ENCODE measurements at regions of chr6 and their contacts with region 1.

Region 1: DNA sequence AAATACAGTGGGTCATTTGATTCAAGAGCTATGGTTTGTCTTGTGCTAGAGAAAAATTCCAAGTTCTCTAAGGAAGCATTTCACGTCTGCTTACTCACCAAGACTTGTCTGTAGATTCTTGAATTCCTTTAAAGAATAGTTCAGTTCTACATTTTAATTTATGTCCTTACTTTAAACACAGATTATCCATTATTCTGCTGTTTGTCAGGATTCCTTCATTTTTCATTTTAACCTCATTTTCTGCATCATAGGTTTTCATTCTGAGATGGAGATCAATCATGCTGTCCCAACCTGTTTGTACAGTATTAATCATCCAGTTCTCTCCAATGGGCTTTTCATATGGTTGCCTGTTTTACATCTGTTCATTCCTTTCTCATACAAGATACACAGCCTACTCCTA is 24.5 kb upstream of the POPDC3 start:
- DNase-seq: peak in 1 of 2 experiments; percentile 59
- H3K4me3 ChIP-seq: no peak overlapping the region
- H3K27ac ChIP-seq: no peak overlapping the region
- H3K4me1 ChIP-seq: peaks cover 25% of the 10 kb centered on the region
- H3K27me3 ChIP-seq: no peaks in the 10 kb centered on the region
- CTCF ChIP-seq: no peak

Region 2: DNA sequence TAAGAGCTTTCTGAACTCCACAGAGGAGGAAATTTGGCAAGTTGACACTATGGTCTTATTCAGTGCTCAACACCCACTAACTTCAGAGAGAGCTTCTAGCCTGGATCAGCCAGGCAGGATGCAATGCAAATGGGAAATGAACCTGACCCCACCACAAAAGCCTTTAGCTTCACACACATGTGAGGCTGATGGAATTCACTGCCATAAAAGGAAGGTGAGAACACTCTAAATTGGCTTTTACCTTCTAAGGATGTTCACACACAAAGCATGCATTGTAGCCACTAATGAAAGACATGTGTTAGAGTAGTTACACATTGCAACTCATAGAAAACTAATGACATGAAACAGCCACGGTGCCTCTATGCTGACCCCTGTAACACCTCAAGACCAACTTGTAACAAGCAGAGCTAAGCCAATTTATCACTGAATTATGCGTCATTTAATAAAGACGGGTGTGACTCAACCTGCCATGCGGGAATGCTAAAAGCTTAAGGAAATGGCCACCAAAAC is 606.7 kb before region 1 on chr6:
- CTCF ChIA-PET with region 1: no interaction called
- POLR2A ChIA-PET with region 1: no interaction called
- intact Hi-C with region 1: no loop called
- DNase-seq: no peak
- H3K4me3 ChIP-seq: no peak overlapping the region
- H3K27ac ChIP-seq: no peak overlapping the region
- H3K4me1 ChIP-seq: no peaks in the 10 kb centered on the region
- H3K27me3 ChIP-seq: no peaks in the 10 kb centered on the region
- CTCF ChIP-seq: no peak

Region 3: GRCh38 chr6:104754788-104755409 is 449.4 kb before region 1 on chr6:
- CTCF ChIA-PET with region 1: interaction called, 10 read pairs
- POLR2A ChIA-PET with region 1: no interaction called
- intact Hi-C with region 1: no loop called
- DNase-seq: no peak
- H3K4me3 ChIP-seq: no peak overlapping the region
- H3K27ac ChIP-seq: no peak overlapping the region
- H3K4me1 ChIP-seq: no peaks in the 10 kb centered on the region
- H3K27me3 ChIP-seq: no peaks in the 10 kb centered on the region
- CTCF ChIP-seq: no peak

Region 4: GRCh38 chr6:105189026-105189820 is 15.1 kb before region 1 on chr6:
- CTCF ChIA-PET with region 1: no interaction called
- POLR2A ChIA-PET with region 1: no interaction called
- intact Hi-C with region 1: no loop called
- DNase-seq: no peak
- H3K4me3 ChIP-seq: no peak overlapping the region
- H3K27ac ChIP-seq: no peak overlapping the region
- H3K4me1 ChIP-seq: no peaks in the 10 kb centered on the region
- H3K27me3 ChIP-seq: no peaks in the 10 kb centered on the region
- CTCF ChIP-seq: no peak

Region 5: GRCh38 chr6:105263685-105264610 is 59.6 kb after region 1 on chr6:
- CTCF ChIA-PET with region 1: no interaction called
- POLR2A ChIA-PET with region 1: no interaction called
- intact Hi-C with region 1: no loop called
- DNase-seq: no peak
- H3K4me3 ChIP-seq: no peak overlapping the region
- H3K27ac ChIP-seq: no peak overlapping the region
- H3K4me1 ChIP-seq: no peaks in the 10 kb centered on the region
- H3K27me3 ChIP-seq: no peaks in the 10 kb centered on the region
- CTCF ChIP-seq: no peak

Region 6: GRCh38 chr6:105824732-105825131 is 620.4 kb after region 1 on chr6:
- CTCF ChIA-PET with region 1: no interaction called
- POLR2A ChIA-PET with region 1: no interaction called
- intact Hi-C with region 1: no loop called
- DNase-seq: no peak
- H3K4me3 ChIP-seq: no peak overlapping the region
- H3K27ac ChIP-seq: no peak overlapping the region
- H3K4me1 ChIP-seq: no peaks in the 10 kb centered on the region
- H3K27me3 ChIP-seq: no peaks in the 10 kb centered on the region
- CTCF ChIP-seq: no peak

Measured in PC-9 (cell line).